ENCODE measurements at regions of chr6 and their contacts with region 1.

Region 1: DNA sequence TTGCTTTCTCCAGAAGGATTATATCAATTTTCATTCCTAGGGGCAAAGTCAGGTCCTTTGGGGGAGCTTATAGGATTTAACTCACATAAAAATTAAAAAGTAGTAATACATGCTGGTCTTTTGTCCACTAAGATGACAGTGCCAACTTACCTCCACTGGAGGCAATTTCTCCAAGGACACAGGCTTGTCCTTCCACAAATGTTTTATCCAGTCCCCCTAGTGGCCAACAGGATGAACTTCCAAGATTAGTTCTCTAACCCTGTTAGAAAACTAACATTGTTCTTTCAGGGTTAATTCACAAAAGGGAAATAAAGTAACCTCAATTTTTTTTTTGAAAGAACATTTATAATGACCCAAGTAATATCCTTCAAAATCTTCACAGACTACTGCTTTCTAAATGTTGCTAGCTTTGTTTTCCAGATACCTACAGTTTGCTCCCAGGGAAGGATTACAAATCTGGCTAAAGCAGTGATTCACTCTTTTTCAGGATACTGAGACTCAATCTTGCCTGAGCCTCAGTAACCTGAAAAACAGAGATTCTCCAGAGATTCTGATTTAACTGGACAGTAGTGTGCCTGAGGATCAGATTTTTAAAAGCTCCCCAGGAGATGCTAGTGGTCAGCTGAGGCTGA is 31.7 kb upstream of the UBR2 start:
- DNase-seq: peak; percentile 24
- H3K4me3 ChIP-seq: no peak overlapping the region
- H3K27ac ChIP-seq: no peak overlapping the region
- H3K4me1 ChIP-seq: no peaks in the 10 kb centered on the region
- H3K27me3 ChIP-seq: no peaks in the 10 kb centered on the region
- CTCF ChIP-seq: peak; percentile 62 to 92 (median 82)
- POLR2A ChIP-seq: no peak

Region 2: GRCh38 chr6:42453031-42453653 is 79.0 kb before region 1 on chr6:
- intact Hi-C with region 1: loop called (anchors 2 kb)
- DNase-seq: peak; percentile 84
- H3K4me3 ChIP-seq: peak overlapping the region; percentile 55 to 75
- H3K27ac ChIP-seq: peak overlapping the region; percentile 74 to 87
- H3K4me1 ChIP-seq: peaks cover 14% of the 10 kb centered on the region
- H3K27me3 ChIP-seq: no peaks in the 10 kb centered on the region
- CTCF ChIP-seq: no peak
- POLR2A ChIP-seq: peak; percentile 64

Region 3: GRCh38 chr6:42790549-42791181 is 258.5 kb after region 1 on chr6:
- intact Hi-C with region 1: no loop called
- DNase-seq: no peak
- H3K4me3 ChIP-seq: no peak overlapping the region
- H3K27ac ChIP-seq: peak overlapping the region in 1 of 2 donors; percentile 15
- H3K4me1 ChIP-seq: no peaks in the 10 kb centered on the region
- H3K27me3 ChIP-seq: no peaks in the 10 kb centered on the region
- CTCF ChIP-seq: no peak
- POLR2A ChIP-seq: no peak

Measured in prostate gland (tissue), 2 donors.